ENCODE measurements at regions of chr1 and their contacts with region 1.

Region 1: GRCh38 chr1:85027242-85027983 is 20.9 kb downstream of the MCOLN3 start:
- DNase-seq: peak in 4 of 5 donors; percentile 38 to 47 (median 42)
- H3K4me3 ChIP-seq: no peak overlapping the region
- H3K4me3 Mint-ChIP-seq: peak overlapping the region; percentile 63 to 80 (median 74)
- H3K27ac ChIP-seq: peak overlapping the region; percentile 16
- H3K27ac Mint-ChIP-seq: peak overlapping the region; percentile 60 to 88 (median 79)
- H3K4me1 ChIP-seq: peaks cover 13% of the 10 kb centered on the region
- H3K4me1 Mint-ChIP-seq: peaks cover 6 to 11% (median 8%) of the 10 kb centered on the region in 4 donors
- H3K27me3 ChIP-seq: no peaks in the 10 kb centered on the region
- H3K27me3 Mint-ChIP-seq: no peaks in the 10 kb centered on the region

Region 2: DNA sequence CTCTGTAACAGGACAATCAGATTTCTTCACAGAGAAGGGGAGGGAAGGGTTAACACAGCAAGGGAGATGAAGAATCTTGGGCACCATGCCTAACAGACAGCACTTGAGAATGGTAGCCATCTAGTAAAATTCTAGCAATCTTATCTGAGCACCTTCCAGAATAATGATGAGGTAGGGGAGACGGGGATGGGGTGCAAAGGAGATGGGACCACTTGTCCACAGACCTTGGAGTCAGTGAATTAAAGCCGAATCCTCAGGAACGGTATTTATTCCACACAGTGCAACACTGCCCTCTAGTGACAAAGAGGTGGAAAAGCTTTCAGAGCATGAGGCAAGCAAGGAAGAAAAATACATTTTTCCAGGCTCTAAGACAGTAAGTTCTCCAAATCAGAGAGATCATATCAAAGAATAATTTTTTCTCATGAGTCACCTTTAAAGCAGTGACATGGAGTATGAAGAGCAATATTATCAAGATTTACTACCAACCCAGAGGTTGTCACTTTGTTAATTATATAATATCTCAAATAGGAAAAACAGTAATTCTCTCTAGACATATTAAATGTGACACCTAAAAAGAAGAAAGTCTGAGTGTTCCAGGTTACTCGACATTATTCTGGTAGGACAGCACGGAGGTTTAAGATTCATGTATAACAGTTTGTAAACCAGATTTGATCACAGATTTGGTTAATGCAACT is 91.2 kb before region 1 on chr1:
- CTCF ChIA-PET with region 1: interaction called, 176 read pairs
- POLR2A ChIA-PET with region 1: no interaction called
- intact Hi-C with region 1: no loop called
- DNase-seq: peak in 4 of 5 donors; percentile 52 to 62 (median 60)
- H3K4me3 ChIP-seq: no peak overlapping the region
- H3K4me3 Mint-ChIP-seq: no peak overlapping the region
- H3K27ac ChIP-seq: no peak overlapping the region
- H3K27ac Mint-ChIP-seq: no peak overlapping the region
- H3K4me1 ChIP-seq: peaks cover 3% of the 10 kb centered on the region
- H3K4me1 Mint-ChIP-seq: peaks cover 0 to 5% (median 2%) of the 10 kb centered on the region in 4 donors
- H3K27me3 ChIP-seq: no peaks in the 10 kb centered on the region
- H3K27me3 Mint-ChIP-seq: no peaks in the 10 kb centered on the region

Region 3: DNA sequence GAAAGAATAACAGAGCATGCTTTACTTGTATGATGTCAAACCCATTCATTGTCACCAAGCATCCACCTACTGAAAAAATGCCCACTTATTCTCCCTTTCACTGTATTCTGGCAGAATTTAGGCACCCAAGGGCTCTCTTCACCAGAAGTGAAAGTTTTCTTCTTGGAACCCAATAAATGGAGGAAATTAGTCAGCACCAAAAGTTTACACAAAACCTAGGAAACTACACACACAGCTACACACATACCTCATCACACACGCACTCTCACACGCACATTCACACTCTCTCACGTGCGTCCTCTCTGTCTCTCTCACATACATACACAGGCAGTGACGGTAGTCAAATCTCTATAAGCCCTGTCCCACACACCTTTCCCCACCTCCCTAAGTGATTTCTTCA is 68.1 kb before region 1 on chr1:
- CTCF ChIA-PET with region 1: interaction called, 10 read pairs
- POLR2A ChIA-PET with region 1: no interaction called
- intact Hi-C with region 1: no loop called
- DNase-seq: peak in 3 of 5 donors; percentile 9 to 58 (median 44)
- H3K4me3 ChIP-seq: no peak overlapping the region
- H3K4me3 Mint-ChIP-seq: no peak overlapping the region
- H3K27ac ChIP-seq: no peak overlapping the region
- H3K27ac Mint-ChIP-seq: peak overlapping the region in 3 of 7 donors; percentile 12 to 50 (median 31)
- H3K4me1 ChIP-seq: no peaks in the 10 kb centered on the region
- H3K4me1 Mint-ChIP-seq: peaks cover 3 to 6% (median 5%) of the 10 kb centered on the region in 4 donors
- H3K27me3 ChIP-seq: no peaks in the 10 kb centered on the region
- H3K27me3 Mint-ChIP-seq: peaks cover 0 to 2% of the 10 kb centered on the region in 2 donors

Region 4: GRCh38 chr1:84973498-84974334 is 53.7 kb before region 1 on chr1:
- CTCF ChIA-PET with region 1: interaction called, 20 read pairs
- POLR2A ChIA-PET with region 1: no interaction called
- intact Hi-C with region 1: no loop called
- DNase-seq: peak in 1 of 5 donors; percentile 25
- H3K4me3 ChIP-seq: no peak overlapping the region
- H3K4me3 Mint-ChIP-seq: peak overlapping the region in 3 of 8 donors; percentile 10 to 30 (median 23)
- H3K27ac ChIP-seq: no peak overlapping the region
- H3K27ac Mint-ChIP-seq: peak overlapping the region in 4 of 7 donors; percentile 15 to 82 (median 48)
- H3K4me1 ChIP-seq: peaks cover 24% of the 10 kb centered on the region
- H3K4me1 Mint-ChIP-seq: peaks cover 26 to 47% (median 36%) of the 10 kb centered on the region in 4 donors
- H3K27me3 ChIP-seq: no peaks in the 10 kb centered on the region
- H3K27me3 Mint-ChIP-seq: no peaks in the 10 kb centered on the region

Region 5: DNA sequence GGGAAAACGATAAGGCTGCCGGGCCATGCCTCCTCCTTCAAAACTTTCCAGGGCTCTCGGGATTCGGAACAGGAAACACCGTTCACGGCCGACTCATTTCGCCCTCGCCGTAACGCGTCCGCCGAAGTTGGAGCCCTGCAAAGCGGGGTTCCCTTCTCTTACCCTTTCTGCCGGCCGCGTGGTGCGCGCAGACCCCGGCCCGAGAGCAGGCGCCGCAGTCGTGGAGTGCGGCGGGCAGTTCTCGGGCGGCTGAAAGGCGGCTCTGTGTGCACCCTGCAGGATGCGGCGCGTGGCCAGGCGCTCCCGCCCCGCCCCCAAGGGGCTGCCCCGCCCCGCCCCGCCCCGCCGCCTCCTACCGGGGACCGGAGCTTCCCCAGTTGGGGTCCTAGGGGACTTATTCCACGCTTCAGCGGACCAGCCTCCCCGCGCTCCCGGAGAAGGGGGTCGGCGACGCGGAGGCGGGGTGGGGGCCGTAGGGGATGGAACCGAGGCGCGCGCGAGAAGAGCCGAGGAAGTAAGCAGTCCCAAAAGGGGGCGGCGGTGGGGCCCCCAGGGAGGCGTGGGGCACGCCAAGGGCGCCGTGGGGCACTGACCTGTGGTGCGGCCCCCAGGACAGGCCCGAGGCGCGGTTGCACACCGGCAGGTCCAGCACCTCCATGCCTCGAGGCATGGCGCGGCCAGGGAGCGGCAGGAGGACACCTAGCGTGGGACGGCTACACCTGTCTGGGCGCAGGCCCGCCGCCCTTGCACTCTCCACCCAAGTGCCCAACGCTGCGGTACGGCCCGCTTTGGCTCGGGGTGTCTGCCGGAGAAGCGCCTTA is 30.4 kb before region 1 on chr1 and contains the start of gene MCOLN2:
- CTCF ChIA-PET with region 1: interaction called, 6 read pairs
- POLR2A ChIA-PET with region 1: interaction called, 6 read pairs
- intact Hi-C with region 1: loop called (anchors 1 kb)
- DNase-seq: peak; percentile 42 to 58 (median 52)
- H3K4me3 ChIP-seq: peak within 1 kb of the TSS; percentile 82 to 86
- H3K4me3 Mint-ChIP-seq: peak within 1 kb of the TSS; percentile 81 to 98 (median 89)
- H3K27ac ChIP-seq: peak within 1 kb of the TSS; percentile 50
- H3K27ac Mint-ChIP-seq: peak within 1 kb of the TSS; percentile 51 to 88 (median 76)
- H3K4me1 ChIP-seq: peaks cover 56% of the 10 kb centered on the region
- H3K4me1 Mint-ChIP-seq: peaks cover 30 to 67% (median 39%) of the 10 kb centered on the region in 4 donors
- H3K27me3 ChIP-seq: peaks cover 4% of the 10 kb centered on the region
- H3K27me3 Mint-ChIP-seq: peaks cover 3 to 17% of the 10 kb centered on the region in 2 donors
- total RNA-seq, gene MCOLN2: 16.8 to 20.3 TPM

Region 6: GRCh38 chr1:85116856-85117255 is 89.4 kb after region 1 on chr1:
- CTCF ChIA-PET with region 1: no interaction called
- POLR2A ChIA-PET with region 1: no interaction called
- intact Hi-C with region 1: no loop called
- DNase-seq: no peak
- H3K4me3 ChIP-seq: no peak overlapping the region
- H3K4me3 Mint-ChIP-seq: no peak overlapping the region
- H3K27ac ChIP-seq: no peak overlapping the region
- H3K27ac Mint-ChIP-seq: peak overlapping the region in 1 of 7 donors; percentile 27
- H3K4me1 ChIP-seq: no peaks in the 10 kb centered on the region
- H3K4me1 Mint-ChIP-seq: no peaks in the 10 kb centered on the region
- H3K27me3 ChIP-seq: no peaks in the 10 kb centered on the region
- H3K27me3 Mint-ChIP-seq: peaks cover 7 to 19% of the 10 kb centered on the region in 2 donors

Measured in CD4-positive, alpha-beta memory T cell (primary cell).